ENCODE measurements at regions of chr20 and their contacts with region 1.

Region 1: GRCh38 chr20:48738399-48739304 is 89.1 kb downstream of the PREX1 start:
- DNase-seq: no peak
- ATAC-seq: peak; percentile 52 to 64
- H3K4me3 Mint-ChIP-seq: peak overlapping the region in 9 of 10 donors; percentile 3 to 71 (median 60)
- H3K27ac Mint-ChIP-seq: peak overlapping the region in 9 of 10 donors; percentile 65 to 95 (median 83)
- H3K4me1 Mint-ChIP-seq: peaks cover 45 to 70% (median 68%) of the 10 kb centered on the region in 4 donors
- H3K27me3 Mint-ChIP-seq: no peaks in the 10 kb centered on the region

Region 2: GRCh38 chr20:48697879-48698724 is 40.5 kb before region 1 on chr20:
- POLR2A ChIA-PET with region 1: no interaction called
- DNase-seq: no peak
- ATAC-seq: no peak
- H3K4me3 Mint-ChIP-seq: no peak overlapping the region
- H3K27ac Mint-ChIP-seq: peak overlapping the region in 5 of 10 donors; percentile 34 to 94 (median 71)
- H3K4me1 Mint-ChIP-seq: peaks cover 27 to 39% (median 35%) of the 10 kb centered on the region in 4 donors
- H3K27me3 Mint-ChIP-seq: no peaks in the 10 kb centered on the region

Region 3: DNA sequence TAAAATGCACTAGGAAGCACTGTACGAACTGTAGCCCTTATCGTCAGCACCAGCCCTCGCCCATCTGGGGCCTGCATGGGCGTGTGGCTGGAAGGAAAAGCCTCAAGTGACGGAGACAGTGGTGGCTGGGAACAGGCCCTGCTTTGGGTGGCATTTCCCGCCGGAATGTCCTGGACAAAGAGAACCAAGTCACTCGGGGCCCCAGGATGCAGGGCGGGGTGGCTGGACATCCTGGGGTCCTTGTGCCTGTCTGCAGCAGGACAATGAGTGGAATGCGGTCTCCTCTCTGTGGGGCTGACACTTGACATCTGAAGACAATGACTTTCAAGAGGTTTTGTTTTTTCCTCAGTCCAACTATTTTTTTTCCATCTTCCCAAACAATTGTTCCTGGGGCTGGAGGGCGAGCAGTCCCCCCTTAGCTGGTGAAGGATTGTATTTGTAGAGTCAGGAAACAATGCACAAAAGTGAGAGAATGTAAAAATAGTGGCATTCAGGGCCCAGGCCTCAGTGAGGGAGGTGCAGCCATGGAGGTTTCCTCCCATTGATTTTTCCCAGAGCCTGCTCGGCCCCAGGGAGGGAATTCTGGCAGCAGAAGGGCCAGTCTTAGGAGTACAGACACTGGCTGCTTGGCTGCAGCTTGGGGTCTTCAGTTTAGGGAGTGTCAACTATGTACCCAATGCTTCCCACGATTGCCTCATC is 24.7 kb after region 1 on chr20:
- POLR2A ChIA-PET with region 1: no interaction called
- DNase-seq: peak in 1 of 10 donors; percentile 49
- ATAC-seq: no peak
- H3K4me3 Mint-ChIP-seq: peak overlapping the region in 5 of 10 donors; percentile 6 to 34 (median 15)
- H3K27ac Mint-ChIP-seq: peak overlapping the region; percentile 88 to 100 (median 96)
- H3K4me1 Mint-ChIP-seq: peaks cover 43 to 98% (median 92%) of the 10 kb centered on the region in 4 donors
- H3K27me3 Mint-ChIP-seq: no peaks in the 10 kb centered on the region

Region 4: DNA sequence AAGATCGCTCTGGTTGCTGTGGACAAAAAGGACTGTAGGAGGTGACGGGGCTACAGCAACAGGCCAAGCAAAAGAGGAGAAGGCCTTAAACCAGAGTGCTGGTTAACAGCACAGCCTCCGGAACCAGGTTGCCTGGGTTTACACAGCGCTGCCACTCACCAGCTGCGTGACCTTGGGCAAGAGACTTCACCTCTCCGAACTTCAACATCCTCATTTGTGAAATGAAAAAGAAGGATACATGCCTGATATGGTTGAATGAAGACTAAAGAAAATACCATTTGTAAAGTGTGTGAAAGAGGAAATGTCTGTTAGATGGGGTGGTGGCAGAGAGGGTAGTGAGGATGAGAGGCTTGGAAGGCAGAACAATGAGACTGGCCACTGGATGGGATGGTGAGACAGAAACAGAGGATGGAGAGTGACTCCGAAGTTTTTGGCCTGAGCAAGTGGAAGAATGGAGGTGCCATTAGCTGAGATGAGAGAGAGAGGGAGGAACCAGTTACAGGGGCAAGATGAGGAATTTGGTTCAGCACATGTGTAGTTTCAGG is 44.3 kb after region 1 on chr20:
- POLR2A ChIA-PET with region 1: interaction called, 11 read pairs
- DNase-seq: no peak
- ATAC-seq: no peak
- H3K4me3 Mint-ChIP-seq: no peak overlapping the region
- H3K27ac Mint-ChIP-seq: no peak overlapping the region
- H3K4me1 Mint-ChIP-seq: peaks cover 13 to 34% (median 22%) of the 10 kb centered on the region in 4 donors
- H3K27me3 Mint-ChIP-seq: no peaks in the 10 kb centered on the region

Measured in naive thymus-derived CD8-positive, alpha-beta T cell (primary cell).